ENCODE measurements at regions of chr4 and their contacts with region 1.

Region 1: GRCh38 chr4:2276581-2277325 is 14.8 kb upstream of the MXD4 start:
- DNase-seq: no peak
- H3K4me3 ChIP-seq: no peak overlapping the region
- H3K27ac ChIP-seq: no peak overlapping the region
- H3K4me1 ChIP-seq: no peaks in the 10 kb centered on the region
- H3K27me3 ChIP-seq: no peaks in the 10 kb centered on the region
- CTCF ChIP-seq: no peak
- EP300 ChIP-seq: no peak
- POLR2A ChIP-seq: no peak

Region 2: GRCh38 chr4:2220016-2220630 is 56.6 kb before region 1 on chr4:
- in situ Hi-C with region 1: loop called in 1 of 4 experiments (anchors 10 kb)
- intact Hi-C with region 1: no loop called
- DNase-seq: peak; percentile 75
- H3K4me3 ChIP-seq: no peak overlapping the region
- H3K27ac ChIP-seq: no peak overlapping the region
- H3K4me1 ChIP-seq: no peaks in the 10 kb centered on the region
- H3K27me3 ChIP-seq: no peaks in the 10 kb centered on the region
- CTCF ChIP-seq: peak; percentile 79 to 82 (median 79)
- EP300 ChIP-seq: no peak
- POLR2A ChIP-seq: no peak

Region 3: DNA sequence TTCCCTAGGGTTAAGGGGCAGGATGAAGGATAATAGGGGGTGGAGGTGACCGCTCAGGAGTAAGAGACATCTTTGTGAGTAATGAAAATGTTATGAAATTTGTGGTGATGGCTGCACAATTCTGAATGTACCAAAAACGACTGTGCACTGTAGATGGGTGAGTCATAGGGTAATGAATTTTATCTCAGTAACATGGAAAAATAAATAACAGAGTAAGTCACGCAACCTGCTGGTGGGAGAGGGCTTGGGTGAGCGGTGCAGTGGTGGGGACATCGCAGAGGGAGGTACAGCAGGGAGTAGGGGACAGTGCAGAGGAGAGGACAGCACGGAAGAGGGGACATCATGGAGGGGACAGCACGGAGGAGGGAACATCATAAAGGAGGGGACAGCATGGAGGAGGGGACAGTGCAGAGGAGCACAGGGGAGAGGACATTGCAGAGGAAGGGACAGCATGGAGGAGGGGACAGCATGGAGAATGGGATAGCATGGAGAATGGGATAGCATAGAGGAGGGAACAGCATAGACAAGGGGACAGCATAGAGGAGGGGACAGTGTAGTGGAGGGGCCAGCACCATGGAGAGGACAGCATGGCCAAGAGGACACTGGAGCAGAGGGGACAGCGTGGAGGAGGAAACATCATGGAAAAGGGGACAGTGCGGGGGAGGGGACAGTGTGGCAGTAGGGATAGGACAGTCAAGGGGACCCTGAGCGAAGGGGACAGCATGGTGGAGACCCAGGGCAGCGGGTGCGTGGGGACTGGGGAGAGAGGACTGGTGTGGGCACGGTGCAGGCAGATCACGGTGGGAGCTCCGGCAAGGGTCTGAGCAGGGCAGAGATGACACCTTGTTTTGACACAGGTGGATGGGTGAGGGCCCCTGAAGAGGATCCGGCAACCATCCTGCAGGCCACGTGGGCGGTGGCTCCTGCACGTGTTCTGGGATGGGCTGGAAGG is 53.6 kb after region 1 on chr4:
- in situ Hi-C with region 1: no loop called
- intact Hi-C with region 1: loop called (anchors 5 kb)
- DNase-seq: no peak
- H3K4me3 ChIP-seq: no peak overlapping the region
- H3K27ac ChIP-seq: no peak overlapping the region
- H3K4me1 ChIP-seq: peaks cover 0 to 12% (median 9%) of the 10 kb centered on the region in 4 donors
- H3K27me3 ChIP-seq: no peaks in the 10 kb centered on the region
- CTCF ChIP-seq: no peak
- EP300 ChIP-seq: no peak
- POLR2A ChIP-seq: no peak